ENCODE measurements at regions of chr16 and their contacts with region 1.

Region 1: DNA sequence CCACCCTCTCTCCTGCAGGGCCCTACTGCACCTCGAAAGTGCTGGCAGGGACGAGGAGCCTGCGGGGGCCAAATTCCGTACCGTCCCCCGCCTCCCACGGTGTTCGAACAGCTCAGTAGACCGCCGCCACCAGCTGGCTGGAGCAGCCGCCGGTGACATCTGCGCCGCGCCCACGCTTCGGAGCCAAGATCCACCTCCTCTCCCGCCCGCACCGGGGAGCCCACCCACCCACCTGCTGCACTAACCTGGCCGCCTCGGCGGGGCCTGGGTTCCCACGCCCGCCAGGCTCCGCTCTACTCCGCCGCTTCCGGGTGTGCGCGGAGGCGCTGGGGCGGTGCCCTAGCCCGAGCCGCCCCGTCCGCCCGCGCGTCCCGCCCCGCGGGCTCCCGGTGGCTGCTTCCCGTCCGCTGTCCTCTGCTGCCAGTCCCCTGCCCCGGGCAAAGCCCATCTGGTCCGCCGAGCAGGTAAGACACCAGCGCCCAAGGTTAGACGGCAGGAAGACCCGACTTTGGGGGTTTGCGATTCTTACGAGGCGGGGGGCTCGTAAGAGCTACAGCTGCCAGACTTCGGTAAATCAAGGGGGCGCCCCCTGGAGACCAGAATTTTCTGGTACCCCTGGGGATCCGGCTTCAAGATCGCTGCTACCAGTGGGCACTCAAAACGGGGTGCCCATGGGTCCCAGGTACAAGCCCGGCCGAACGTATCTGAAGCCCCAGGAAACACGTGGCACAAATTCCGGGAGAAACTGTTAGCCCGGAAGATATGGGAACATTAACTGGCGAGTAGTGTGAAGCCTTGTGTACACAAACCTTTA is at the starts of genes FBXL8 and TRADD:
- DNase-seq: peak; percentile 75
- H3K4me3 ChIP-seq: peak within 1 kb of the TSS; percentile 88
- H3K27ac ChIP-seq: peak within 1 kb of the TSS; percentile 60
- H3K4me1 ChIP-seq: peaks cover 7% of the 10 kb centered on the region
- H3K27me3 ChIP-seq: no peaks in the 10 kb centered on the region
- CTCF ChIP-seq: peak; percentile 73
- total RNA-seq, gene FBXL8: 8.3 and 13.8 TPM in 2 replicates
- total RNA-seq, gene TRADD: 7.7 and 10.8 TPM in 2 replicates

Region 2: DNA sequence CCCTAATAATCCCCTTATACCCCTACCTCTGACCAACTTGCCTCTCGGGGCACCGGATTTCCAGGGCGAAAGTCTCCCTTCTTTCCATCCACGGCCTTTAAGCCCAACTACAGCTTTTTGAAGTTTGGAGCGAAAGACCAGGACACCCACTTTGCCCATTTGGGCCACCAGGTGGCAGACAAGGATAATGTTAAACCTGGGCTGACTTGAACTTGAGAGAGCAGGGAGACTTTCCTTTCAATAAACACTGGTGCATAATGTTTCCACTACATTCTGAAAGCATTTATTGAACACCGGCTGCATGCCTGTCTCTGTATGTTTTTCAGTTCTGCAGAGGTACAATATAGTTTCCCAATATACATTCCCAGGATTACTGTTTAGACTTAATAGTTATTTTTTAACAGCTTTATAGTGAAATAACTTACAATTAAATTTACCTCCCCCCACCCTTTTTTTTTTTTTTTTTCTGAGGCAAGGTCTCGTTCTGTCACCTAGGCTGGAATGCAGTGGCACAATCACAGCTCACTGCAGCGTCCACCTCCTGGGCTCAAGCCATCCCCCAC is 205.6 kb before region 1 on chr16:
- CTCF ChIA-PET with region 1: interaction called, 14 read pairs
- POLR2A ChIA-PET with region 1: no interaction called
- intact Hi-C with region 1: loop called (anchors 5 kb)
- DNase-seq: peak; percentile 87
- H3K4me3 ChIP-seq: no peak overlapping the region
- H3K27ac ChIP-seq: no peak overlapping the region
- H3K4me1 ChIP-seq: no peaks in the 10 kb centered on the region
- H3K27me3 ChIP-seq: no peaks in the 10 kb centered on the region
- CTCF ChIP-seq: peak; percentile 90

Region 3: DNA sequence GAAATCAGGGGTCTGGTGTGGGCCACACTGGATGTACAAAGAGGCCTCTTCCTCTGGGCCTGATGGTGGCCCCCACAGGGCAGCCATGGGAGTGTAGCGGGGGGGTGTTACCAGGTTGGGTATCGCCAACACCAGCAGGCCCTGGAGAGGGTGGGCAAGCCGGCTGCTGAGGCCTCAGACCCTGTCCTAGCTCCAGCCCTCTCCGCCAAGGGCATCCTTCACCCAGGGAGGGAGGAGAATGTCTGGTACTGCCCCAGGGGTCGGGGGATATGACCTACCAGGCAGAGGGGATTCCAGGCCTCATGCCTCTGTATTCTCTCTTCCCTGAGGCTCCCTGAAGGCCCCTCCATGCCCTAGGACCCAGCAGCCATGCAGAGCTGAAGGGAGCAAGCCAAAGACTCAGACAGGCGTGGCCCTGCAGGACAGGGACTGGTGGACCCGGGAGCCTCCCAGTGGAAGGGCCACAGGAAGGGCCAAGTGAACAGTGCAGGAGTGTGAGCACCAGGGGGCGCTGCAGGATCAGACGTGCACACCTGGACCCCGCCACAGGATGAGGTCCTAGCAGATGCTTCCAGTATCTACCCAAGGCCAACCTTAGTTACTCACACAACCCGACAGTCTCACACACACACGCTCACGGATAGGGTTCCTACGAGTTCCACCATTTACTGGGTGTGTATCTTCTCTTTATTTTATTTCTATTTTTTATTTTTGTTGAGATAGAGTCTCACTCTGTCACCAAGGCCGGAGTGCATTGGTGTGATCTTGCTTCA is 182.3 kb before region 1 on chr16:
- CTCF ChIA-PET with region 1: interaction called, 11 read pairs
- POLR2A ChIA-PET with region 1: no interaction called
- intact Hi-C with region 1: loop called (anchors 1 kb)
- DNase-seq: peak; percentile 89
- H3K4me3 ChIP-seq: no peak overlapping the region
- H3K27ac ChIP-seq: no peak overlapping the region
- H3K4me1 ChIP-seq: peaks cover 9% of the 10 kb centered on the region
- H3K27me3 ChIP-seq: no peaks in the 10 kb centered on the region
- CTCF ChIP-seq: peak; percentile 93

Region 4: GRCh38 chr16:67024384-67025209 is 135.2 kb before region 1 on chr16:
- CTCF ChIA-PET with region 1: no interaction called
- POLR2A ChIA-PET with region 1: no interaction called
- intact Hi-C with region 1: no loop called
- DNase-seq: peak; percentile 67
- H3K4me3 ChIP-seq: no peak overlapping the region
- H3K27ac ChIP-seq: peak overlapping the region; percentile 72
- H3K4me1 ChIP-seq: peaks cover 14% of the 10 kb centered on the region
- H3K27me3 ChIP-seq: no peaks in the 10 kb centered on the region
- CTCF ChIP-seq: no peak

Region 5: GRCh38 chr16:67170168-67170947 is 10.6 kb after region 1 on chr16 and contains the start of gene NOL3:
- CTCF ChIA-PET with region 1: interaction called, 10 read pairs
- POLR2A ChIA-PET with region 1: interaction called, 4 read pairs
- intact Hi-C with region 1: no loop called
- DNase-seq: peak; percentile 86
- H3K4me3 ChIP-seq: peak within 1 kb of the TSS; percentile 52
- H3K27ac ChIP-seq: peak within 1 kb of the TSS; percentile 69
- H3K4me1 ChIP-seq: peaks cover 25% of the 10 kb centered on the region
- H3K27me3 ChIP-seq: no peaks in the 10 kb centered on the region
- CTCF ChIP-seq: no peak
- total RNA-seq, gene NOL3: 15.3 and 16.4 TPM in 2 replicates

Measured in A673 (cell line).